ENCODE measurements at regions of chr19 and their contacts with region 1.

Region 1: GRCh38 chr19:4633140-4633967 is 6.0 kb upstream of the TNFAIP8L1 start:
- DNase-seq: peak in 4 of 5 donors; percentile 29 to 49 (median 40)
- H3K4me3 ChIP-seq: no peak overlapping the region
- H3K4me3 Mint-ChIP-seq: peak overlapping the region in 3 of 8 donors; percentile 21 to 81 (median 49)
- H3K27ac ChIP-seq: no peak overlapping the region
- H3K27ac Mint-ChIP-seq: peak overlapping the region in 4 of 7 donors; percentile 36 to 91 (median 87)
- H3K4me1 ChIP-seq: peaks cover 14% of the 10 kb centered on the region
- H3K4me1 Mint-ChIP-seq: peaks cover 4 to 17% (median 11%) of the 10 kb centered on the region in 4 donors
- H3K27me3 ChIP-seq: no peaks in the 10 kb centered on the region
- H3K27me3 Mint-ChIP-seq: peaks cover 6 to 8% of the 10 kb centered on the region in 2 donors

Region 2: GRCh38 chr19:4567584-4568071 is 65.7 kb before region 1 on chr19:
- CTCF ChIA-PET with region 1: interaction called, 44 read pairs
- POLR2A ChIA-PET with region 1: no interaction called
- intact Hi-C with region 1: loop called (anchors 1 kb)
- DNase-seq: peak in 4 of 5 donors; percentile 32 to 48 (median 44)
- H3K4me3 ChIP-seq: no peak overlapping the region
- H3K4me3 Mint-ChIP-seq: no peak overlapping the region
- H3K27ac ChIP-seq: no peak overlapping the region
- H3K27ac Mint-ChIP-seq: peak overlapping the region in 1 of 7 donors; percentile 51
- H3K4me1 ChIP-seq: no peaks in the 10 kb centered on the region
- H3K4me1 Mint-ChIP-seq: no peaks in the 10 kb centered on the region
- H3K27me3 ChIP-seq: no peaks in the 10 kb centered on the region
- H3K27me3 Mint-ChIP-seq: peaks cover 4 to 6% of the 10 kb centered on the region in 2 donors

Region 3: DNA sequence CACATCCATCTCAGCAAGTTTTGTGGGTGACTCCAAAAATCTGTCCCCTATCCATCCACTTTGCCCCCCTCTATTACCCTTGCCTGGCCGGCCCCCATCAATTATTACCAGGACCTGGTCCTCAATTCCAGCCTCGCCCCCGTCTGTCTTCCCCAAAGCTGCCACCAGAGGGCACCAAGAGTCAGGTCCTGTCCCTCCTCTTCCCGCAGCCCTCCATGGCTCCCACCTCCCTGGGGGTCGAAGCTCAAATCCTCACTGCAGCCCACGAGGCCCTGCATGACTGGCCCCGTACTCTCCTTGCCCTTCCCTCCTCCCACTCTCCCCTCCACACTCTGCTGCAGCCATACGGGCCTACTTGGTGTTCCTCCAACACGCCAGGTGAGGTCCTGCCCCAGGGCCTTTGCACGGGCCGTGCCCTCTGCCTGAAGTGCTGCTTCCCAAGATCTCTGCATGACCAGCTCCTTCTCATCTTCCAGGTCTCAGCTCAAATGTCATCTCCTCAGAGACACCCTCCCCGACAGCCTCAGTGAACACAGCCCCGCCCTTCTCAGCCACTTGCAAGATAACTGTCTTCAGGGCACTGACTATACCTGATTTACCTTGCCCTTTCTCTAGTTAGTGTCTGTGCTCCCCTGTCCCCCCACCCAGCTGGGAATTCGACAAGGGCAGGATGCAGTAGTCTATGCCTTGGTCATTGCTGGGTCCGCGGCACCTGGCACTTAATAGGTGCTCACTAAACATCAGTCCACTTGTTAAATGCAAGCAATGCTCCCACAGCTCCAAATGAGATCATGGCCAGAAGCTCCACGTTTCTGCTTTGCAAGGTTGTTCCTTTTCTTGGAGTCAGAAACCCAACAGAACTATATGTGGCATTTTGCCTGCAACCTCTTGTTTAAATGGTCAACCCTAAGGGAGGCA is 57.1 kb before region 1 on chr19:
- CTCF ChIA-PET with region 1: interaction called, 57 read pairs
- POLR2A ChIA-PET with region 1: no interaction called
- intact Hi-C with region 1: loop called (anchors 1 kb)
- DNase-seq: peak; percentile 42 to 65 (median 52)
- H3K4me3 ChIP-seq: no peak overlapping the region
- H3K4me3 Mint-ChIP-seq: no peak overlapping the region
- H3K27ac ChIP-seq: no peak overlapping the region
- H3K27ac Mint-ChIP-seq: peak overlapping the region in 1 of 7 donors; percentile 66
- H3K4me1 ChIP-seq: no peaks in the 10 kb centered on the region
- H3K4me1 Mint-ChIP-seq: peaks cover 0 to 1% (median under 1%) of the 10 kb centered on the region in 4 donors
- H3K27me3 ChIP-seq: peaks cover 5% of the 10 kb centered on the region
- H3K27me3 Mint-ChIP-seq: peaks cover 20 to 32% of the 10 kb centered on the region in 2 donors

Measured in CD4-positive, alpha-beta memory T cell (primary cell).